Naive thymus-derived CD4-positive, alpha-beta T cell (primary cell): ENCODE measurements at regions of chr1 and their contacts with region 1.

Region 1: GRCh38 chr1:37807555-37808368 is at the starts of genes C1orf122 and YRDC:
- DNase-seq: peak; percentile 82 to 94 (median 88)
- ATAC-seq: peak; percentile 94
- H3K4me3 ChIP-seq: peak within 1 kb of the TSS; percentile 89
- H3K4me3 Mint-ChIP-seq: peak within 1 kb of the TSS; percentile 85 to 99 (median 96)
- H3K27ac ChIP-seq: peak within 1 kb of the TSS; percentile 96
- H3K27ac Mint-ChIP-seq: peak within 1 kb of the TSS; percentile 89 to 98 (median 96)
- H3K4me1 ChIP-seq: peaks cover 15 to 20% of the 10 kb centered on the region in 2 donors
- H3K4me1 Mint-ChIP-seq: peaks cover 27 to 55% (median 34%) of the 10 kb centered on the region in 7 donors
- H3K27me3 ChIP-seq: no peaks in the 10 kb centered on the region
- H3K27me3 Mint-ChIP-seq: no peaks in the 10 kb centered on the region
- total RNA-seq, gene C1orf122: 11.4 to 20.6 (median 11.7) TPM
- total RNA-seq, gene YRDC: 13.1 to 30.6 (median 22.3) TPM

Region 2: GRCh38 chr1:37479255-37480124 is 328.3 kb before region 1 on chr1:
- CTCF ChIA-PET with region 1: no interaction called
- POLR2A ChIA-PET with region 1: no interaction called
- intact Hi-C with region 1: loop called in 1 of 2 experiments (anchors 1 kb)
- DNase-seq: peak in 8 of 9 donors; percentile 54 to 90 (median 63)
- ATAC-seq: peak; percentile 69
- H3K4me3 ChIP-seq: peak overlapping the region; percentile 87
- H3K4me3 Mint-ChIP-seq: peak overlapping the region; percentile 91 to 99 (median 96)
- H3K27ac ChIP-seq: peak overlapping the region; percentile 95
- H3K27ac Mint-ChIP-seq: peak overlapping the region; percentile 96 to 99 (median 98)
- H3K4me1 ChIP-seq: peaks cover 26% of the 10 kb centered on the region in 2 donors
- H3K4me1 Mint-ChIP-seq: peaks cover 21 to 50% (median 34%) of the 10 kb centered on the region in 7 donors
- H3K27me3 ChIP-seq: no peaks in the 10 kb centered on the region
- H3K27me3 Mint-ChIP-seq: no peaks in the 10 kb centered on the region

Region 3: DNA sequence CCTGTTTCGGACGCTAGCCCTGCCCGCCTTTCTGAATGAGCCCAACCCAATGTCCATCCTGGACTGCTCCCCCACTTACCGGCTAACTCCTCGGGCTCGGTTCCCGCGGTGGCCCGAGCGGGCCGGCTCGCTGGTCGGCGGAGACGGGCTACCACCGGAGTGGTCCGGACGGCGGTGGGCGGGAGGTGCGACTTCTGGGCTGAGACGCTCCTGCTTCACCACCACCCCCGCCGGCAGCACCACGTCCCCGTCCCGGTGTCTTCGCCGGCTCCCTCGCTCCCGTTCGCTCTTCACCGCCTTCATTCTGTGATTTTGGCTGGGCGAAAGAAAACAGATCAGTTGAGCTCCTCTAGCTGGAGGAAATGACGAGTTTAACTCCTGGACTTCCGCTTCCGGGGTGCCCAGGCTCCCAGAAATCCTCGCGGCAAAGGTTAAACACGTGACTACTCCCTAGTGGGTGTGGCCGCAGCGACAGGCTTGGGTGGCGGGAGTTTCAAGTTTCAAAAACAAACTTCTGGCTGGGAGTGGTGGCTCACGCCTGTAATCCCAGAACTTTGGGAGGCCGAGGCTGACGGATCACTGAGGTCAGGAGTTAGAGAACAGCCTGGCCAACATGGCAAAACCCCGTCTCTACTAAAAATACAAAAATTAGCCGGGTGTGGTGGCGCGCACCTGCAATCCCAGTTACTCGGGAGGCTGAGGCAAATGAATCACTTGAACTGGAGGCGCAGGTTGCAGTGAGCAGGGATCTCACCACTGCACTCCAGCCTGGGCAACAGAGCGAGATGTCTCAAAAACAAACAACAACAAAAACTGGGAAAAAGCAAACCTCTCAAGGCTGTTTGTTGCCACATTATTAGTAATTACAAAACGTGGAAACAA is 253.6 kb before region 1 on chr1 and contains the start of gene SNIP1:
- CTCF ChIA-PET with region 1: no interaction called
- POLR2A ChIA-PET with region 1: no interaction called
- intact Hi-C with region 1: loop called in 1 of 2 experiments (anchors 2 kb)
- DNase-seq: peak; percentile 67 to 94 (median 92)
- ATAC-seq: peak; percentile 99
- H3K4me3 ChIP-seq: peak within 1 kb of the TSS; percentile 92
- H3K4me3 Mint-ChIP-seq: peak within 1 kb of the TSS; percentile 97 to 100 (median 99)
- H3K27ac ChIP-seq: peak within 1 kb of the TSS; percentile 94
- H3K27ac Mint-ChIP-seq: peak within 1 kb of the TSS; percentile 91 to 99 (median 98)
- H3K4me1 ChIP-seq: peaks cover 10 to 24% of the 10 kb centered on the region in 2 donors
- H3K4me1 Mint-ChIP-seq: peaks cover 23 to 51% (median 45%) of the 10 kb centered on the region in 7 donors
- H3K27me3 ChIP-seq: no peaks in the 10 kb centered on the region
- H3K27me3 Mint-ChIP-seq: peaks cover 0 to 6% (median 0%) of the 10 kb centered on the region in 5 donors
- total RNA-seq, gene SNIP1: 27.8 to 53.6 (median 36.7) TPM

Region 4: DNA sequence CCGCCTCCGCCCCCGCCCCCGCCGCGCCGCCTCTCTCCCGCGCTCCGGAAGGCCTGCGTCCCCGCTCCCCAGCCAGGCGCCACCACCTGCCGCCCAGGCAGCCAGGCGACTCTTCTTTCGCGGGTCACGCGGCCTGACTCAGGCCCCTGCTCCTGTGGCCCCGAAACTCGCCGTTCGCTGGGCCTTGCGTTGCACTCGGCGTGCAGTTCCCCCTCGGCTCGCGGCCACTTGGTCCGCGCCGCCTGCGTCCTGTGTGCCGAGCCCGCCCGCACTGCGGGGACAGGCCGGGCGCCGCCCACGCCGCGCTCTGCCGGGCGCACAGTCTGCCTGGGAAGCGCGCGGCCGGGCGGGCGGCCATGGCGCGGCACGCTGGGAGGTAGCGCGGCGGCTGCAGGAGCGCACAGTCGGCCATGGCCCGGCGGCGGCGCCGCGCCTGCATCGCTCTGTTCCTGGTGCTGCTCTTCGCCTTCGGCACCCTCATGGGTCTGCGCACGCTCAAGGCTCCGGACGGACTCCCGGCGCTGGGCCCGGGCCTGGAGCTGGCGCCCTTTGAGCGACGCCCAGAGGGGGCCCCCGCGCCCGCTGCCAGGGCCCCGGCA is 13.9 kb before region 1 on chr1 and contains the start of gene MANEAL:
- CTCF ChIA-PET with region 1: no interaction called
- POLR2A ChIA-PET with region 1: interaction called, 5 read pairs
- intact Hi-C with region 1: loop called in 1 of 2 experiments (anchors 2 kb)
- DNase-seq: peak in 5 of 9 donors; percentile 4 to 57 (median 24)
- ATAC-seq: peak; percentile 81
- H3K4me3 ChIP-seq: no peak within 1 kb of the TSS
- H3K4me3 Mint-ChIP-seq: peak within 1 kb of the TSS; percentile 35 to 82 (median 75)
- H3K27ac ChIP-seq: no peak within 1 kb of the TSS
- H3K27ac Mint-ChIP-seq: no peak within 1 kb of the TSS
- H3K4me1 ChIP-seq: peaks cover 3 to 8% of the 10 kb centered on the region in 2 donors
- H3K4me1 Mint-ChIP-seq: peaks cover 8 to 25% (median 14%) of the 10 kb centered on the region in 7 donors
- H3K27me3 ChIP-seq: peaks cover 0 to 8% of the 10 kb centered on the region in 2 donors
- H3K27me3 Mint-ChIP-seq: peaks cover 33 to 43% (median 38%) of the 10 kb centered on the region in 5 donors
- total RNA-seq, gene MANEAL: 0.66 to 2.1 (median 1.1) TPM

Region 5: DNA sequence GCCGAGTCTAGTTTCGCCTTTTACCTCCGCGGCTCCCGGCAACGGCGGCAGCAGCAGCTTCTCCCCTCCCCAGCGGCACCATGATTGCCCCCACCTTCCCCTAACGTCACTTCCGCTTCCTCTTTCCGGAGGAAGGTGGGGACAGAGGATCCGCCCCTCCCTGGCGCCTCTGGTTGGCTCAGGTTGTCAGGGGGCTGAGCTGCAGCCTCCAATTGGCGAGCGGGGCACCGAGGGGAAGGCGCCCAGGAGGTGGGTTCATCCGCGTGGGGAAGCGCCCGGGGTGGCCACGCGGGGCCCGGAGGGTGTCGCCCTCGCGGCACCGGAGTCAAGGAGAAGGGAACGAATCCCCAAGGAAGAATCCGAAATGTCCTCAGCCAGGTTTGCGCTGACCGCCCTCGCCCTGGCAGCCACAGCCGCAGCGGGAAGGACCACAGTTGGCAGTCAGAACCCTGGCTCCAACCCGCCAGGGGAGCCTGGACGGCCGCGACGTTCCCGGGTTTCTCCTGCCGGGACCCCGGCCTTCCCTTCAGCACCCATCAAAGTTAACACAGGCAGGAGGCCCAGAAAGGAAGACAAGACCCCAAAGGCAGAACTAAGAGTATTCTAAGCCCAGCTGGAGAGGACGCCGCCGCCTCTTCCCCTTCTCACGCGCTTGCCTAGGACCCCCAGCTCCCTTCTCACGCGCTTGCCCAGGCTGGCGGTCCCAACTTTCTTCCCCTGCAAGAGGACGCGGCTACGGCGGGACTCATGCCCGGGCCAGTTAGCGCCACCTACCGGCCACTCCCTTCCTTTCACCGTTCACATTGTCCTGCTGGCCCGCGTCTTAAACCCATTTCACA is 52.0 kb after region 1 on chr1 and contains the start of gene MTF1:
- CTCF ChIA-PET with region 1: interaction called, 3 read pairs
- POLR2A ChIA-PET with region 1: interaction called, 21 read pairs
- intact Hi-C with region 1: loop called (anchors 1 kb)
- DNase-seq: peak; percentile 85 to 98 (median 97)
- ATAC-seq: peak; percentile 99
- H3K4me3 ChIP-seq: peak within 1 kb of the TSS; percentile 94
- H3K4me3 Mint-ChIP-seq: peak within 1 kb of the TSS; percentile 89 to 100 (median 96)
- H3K27ac ChIP-seq: peak within 1 kb of the TSS; percentile 89
- H3K27ac Mint-ChIP-seq: peak within 1 kb of the TSS; percentile 90 to 99 (median 95)
- H3K4me1 ChIP-seq: peaks cover 12 to 19% of the 10 kb centered on the region in 2 donors
- H3K4me1 Mint-ChIP-seq: peaks cover 26 to 39% (median 33%) of the 10 kb centered on the region in 7 donors
- H3K27me3 ChIP-seq: no peaks in the 10 kb centered on the region
- H3K27me3 Mint-ChIP-seq: no peaks in the 10 kb centered on the region
- total RNA-seq, gene MTF1: 22.9 to 45.2 (median 27.1) TPM

Region 6: GRCh38 chr1:37931361-37932158 is 123.8 kb after region 1 on chr1:
- CTCF ChIA-PET with region 1: no interaction called
- POLR2A ChIA-PET with region 1: interaction called, 3 read pairs
- intact Hi-C with region 1: loop called (anchors 2 to 5 kb)
- DNase-seq: peak; percentile 92 to 97 (median 96)
- ATAC-seq: peak; percentile 100
- H3K4me3 ChIP-seq: peak overlapping the region; percentile 67
- H3K4me3 Mint-ChIP-seq: peak overlapping the region; percentile 89 to 99 (median 98)
- H3K27ac ChIP-seq: peak overlapping the region; percentile 79
- H3K27ac Mint-ChIP-seq: peak overlapping the region; percentile 78 to 94 (median 87)
- H3K4me1 ChIP-seq: peaks cover 15 to 17% of the 10 kb centered on the region in 2 donors
- H3K4me1 Mint-ChIP-seq: peaks cover 22 to 52% (median 39%) of the 10 kb centered on the region in 7 donors
- H3K27me3 ChIP-seq: no peaks in the 10 kb centered on the region
- H3K27me3 Mint-ChIP-seq: peaks cover 0 to 3% (median 0%) of the 10 kb centered on the region in 5 donors

Region 7: GRCh38 chr1:37946703-37947360 is 139.1 kb after region 1 on chr1 and contains the start of gene INPP5B:
- CTCF ChIA-PET with region 1: no interaction called
- POLR2A ChIA-PET with region 1: no interaction called
- intact Hi-C with region 1: loop called in 1 of 2 experiments (anchors 1 kb)
- DNase-seq: peak; percentile 25 to 79 (median 53)
- ATAC-seq: peak; percentile 91
- H3K4me3 ChIP-seq: peak within 1 kb of the TSS; percentile 61
- H3K4me3 Mint-ChIP-seq: peak within 1 kb of the TSS; percentile 81 to 98 (median 92)
- H3K27ac ChIP-seq: peak within 1 kb of the TSS; percentile 62
- H3K27ac Mint-ChIP-seq: peak within 1 kb of the TSS; percentile 66 to 97 (median 89)
- H3K4me1 ChIP-seq: peaks cover 0 to 7% of the 10 kb centered on the region in 2 donors
- H3K4me1 Mint-ChIP-seq: peaks cover 13 to 26% (median 15%) of the 10 kb centered on the region in 7 donors
- H3K27me3 ChIP-seq: no peaks in the 10 kb centered on the region
- H3K27me3 Mint-ChIP-seq: no peaks in the 10 kb centered on the region
- total RNA-seq, gene INPP5B: 23.3 to 35.7 (median 30.6) TPM